Dendritic cell treated with granulocyte-macrophage colony-stimulating factor and Interleukin-4, amounts not matched to agents 40 ng/mL and 50 ng/mL, for 4 days (primary cell): ENCODE measurements at regions of chr6 and their contacts with region 1.

Region 1: GRCh38 chr6:13328076-13328874 is at the start of gene TBC1D7:
- H3K4me3 Mint-ChIP-seq: peak within 1 kb of the TSS; percentile 88
- H3K27ac Mint-ChIP-seq: peak within 1 kb of the TSS; percentile 89
- H3K4me1 Mint-ChIP-seq: peaks cover 9% of the 10 kb centered on the region
- H3K27me3 Mint-ChIP-seq: no peaks in the 10 kb centered on the region

Region 2: GRCh38 chr6:12911387-12911960 is 416.8 kb before region 1 on chr6:
- intact Hi-C with region 1: loop called (anchors 2 kb)
- H3K4me3 Mint-ChIP-seq: no peak overlapping the region
- H3K27ac Mint-ChIP-seq: no peak overlapping the region
- H3K4me1 Mint-ChIP-seq: peaks cover 11% of the 10 kb centered on the region
- H3K27me3 Mint-ChIP-seq: peaks cover 8% of the 10 kb centered on the region

Region 3: DNA sequence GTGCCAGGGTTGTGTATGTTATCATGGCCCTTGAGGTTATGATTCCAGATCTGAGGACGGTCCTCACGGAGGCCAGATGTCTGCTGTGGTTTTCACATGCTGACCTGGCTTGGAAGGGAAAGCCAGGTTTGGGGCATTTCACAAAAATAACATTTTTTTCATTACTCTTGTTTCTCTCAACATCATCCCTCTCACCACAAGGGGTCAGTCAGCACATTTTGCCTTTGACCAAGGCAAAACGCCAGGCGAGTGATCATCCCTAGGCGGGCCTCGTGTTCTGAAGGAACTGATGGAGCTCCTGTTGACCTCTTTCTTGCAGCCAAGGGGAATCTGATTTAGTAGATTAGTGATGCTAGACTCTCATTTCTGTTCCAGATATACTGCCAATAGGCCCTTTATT is 133.4 kb before region 1 on chr6:
- intact Hi-C with region 1: loop called (anchors 1 kb)
- H3K4me3 Mint-ChIP-seq: no peak overlapping the region
- H3K27ac Mint-ChIP-seq: no peak overlapping the region
- H3K4me1 Mint-ChIP-seq: no peaks in the 10 kb centered on the region
- H3K27me3 Mint-ChIP-seq: no peaks in the 10 kb centered on the region

Region 4: GRCh38 chr6:13286181-13286580 is 42.1 kb before region 1 on chr6:
- intact Hi-C with region 1: no loop called
- H3K4me3 Mint-ChIP-seq: no peak overlapping the region
- H3K27ac Mint-ChIP-seq: peak overlapping the region; percentile 58
- H3K4me1 Mint-ChIP-seq: peaks cover 39% of the 10 kb centered on the region
- H3K27me3 Mint-ChIP-seq: peaks cover 16% of the 10 kb centered on the region

Region 5: DNA sequence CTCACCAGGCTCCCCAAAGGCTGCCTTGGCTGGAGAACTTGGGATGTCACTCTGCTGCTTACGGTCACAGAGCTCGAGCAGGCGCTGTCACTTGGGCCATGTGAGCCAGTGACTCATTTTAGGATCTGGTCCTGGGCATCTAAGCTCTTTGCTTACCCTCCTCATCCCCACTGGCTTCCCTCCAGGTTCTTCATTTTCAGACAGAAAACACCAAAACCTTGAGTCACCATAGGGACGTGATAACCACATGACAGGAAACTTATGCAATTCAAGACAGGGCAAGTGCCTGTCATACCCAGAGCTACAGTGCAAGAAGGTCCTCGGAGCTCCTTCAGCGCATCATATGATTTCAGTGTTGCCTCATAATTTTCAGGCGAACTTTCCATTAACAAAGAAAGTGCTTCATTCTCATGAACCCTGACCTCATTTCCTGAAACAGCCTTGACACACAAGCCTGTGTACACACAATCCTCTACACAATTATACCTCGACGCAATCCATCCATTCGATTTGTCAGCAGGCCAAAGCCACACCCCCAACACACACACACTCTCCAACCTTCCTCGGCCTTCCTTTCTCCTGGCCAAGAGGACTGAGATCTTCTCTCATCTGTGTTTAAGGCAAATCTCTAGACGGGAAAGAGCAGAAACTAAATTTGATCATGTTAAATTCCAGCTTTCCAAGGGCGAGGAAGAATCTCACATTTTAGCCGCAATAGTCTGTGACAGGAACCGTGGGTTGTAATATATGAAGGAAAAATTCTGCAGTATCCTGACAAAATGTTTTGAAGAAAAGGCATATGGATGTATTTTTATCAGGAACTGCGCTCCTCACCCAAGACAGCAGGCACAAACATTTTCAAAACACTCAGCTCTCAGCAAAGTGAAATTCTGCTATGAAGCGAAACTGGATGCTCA is 25.3 kb before region 1 on chr6:
- intact Hi-C with region 1: loop called (anchors 2 kb)
- H3K4me3 Mint-ChIP-seq: peak overlapping the region; percentile 58
- H3K27ac Mint-ChIP-seq: peak overlapping the region; percentile 88
- H3K4me1 Mint-ChIP-seq: peaks cover 42% of the 10 kb centered on the region
- H3K27me3 Mint-ChIP-seq: peaks cover 20% of the 10 kb centered on the region

Region 6: GRCh38 chr6:13614926-13615798 is 286.9 kb after region 1 on chr6 and contains the start of gene NOL7:
- intact Hi-C with region 1: loop called (anchors 5 kb)
- H3K4me3 Mint-ChIP-seq: peak within 1 kb of the TSS; percentile 96
- H3K27ac Mint-ChIP-seq: peak within 1 kb of the TSS; percentile 97
- H3K4me1 Mint-ChIP-seq: peaks cover 41% of the 10 kb centered on the region
- H3K27me3 Mint-ChIP-seq: no peaks in the 10 kb centered on the region